Heart right ventricle (tissue), 16 donors: ENCODE measurements at regions of chr6 and their contacts with region 1.

Region 1: DNA sequence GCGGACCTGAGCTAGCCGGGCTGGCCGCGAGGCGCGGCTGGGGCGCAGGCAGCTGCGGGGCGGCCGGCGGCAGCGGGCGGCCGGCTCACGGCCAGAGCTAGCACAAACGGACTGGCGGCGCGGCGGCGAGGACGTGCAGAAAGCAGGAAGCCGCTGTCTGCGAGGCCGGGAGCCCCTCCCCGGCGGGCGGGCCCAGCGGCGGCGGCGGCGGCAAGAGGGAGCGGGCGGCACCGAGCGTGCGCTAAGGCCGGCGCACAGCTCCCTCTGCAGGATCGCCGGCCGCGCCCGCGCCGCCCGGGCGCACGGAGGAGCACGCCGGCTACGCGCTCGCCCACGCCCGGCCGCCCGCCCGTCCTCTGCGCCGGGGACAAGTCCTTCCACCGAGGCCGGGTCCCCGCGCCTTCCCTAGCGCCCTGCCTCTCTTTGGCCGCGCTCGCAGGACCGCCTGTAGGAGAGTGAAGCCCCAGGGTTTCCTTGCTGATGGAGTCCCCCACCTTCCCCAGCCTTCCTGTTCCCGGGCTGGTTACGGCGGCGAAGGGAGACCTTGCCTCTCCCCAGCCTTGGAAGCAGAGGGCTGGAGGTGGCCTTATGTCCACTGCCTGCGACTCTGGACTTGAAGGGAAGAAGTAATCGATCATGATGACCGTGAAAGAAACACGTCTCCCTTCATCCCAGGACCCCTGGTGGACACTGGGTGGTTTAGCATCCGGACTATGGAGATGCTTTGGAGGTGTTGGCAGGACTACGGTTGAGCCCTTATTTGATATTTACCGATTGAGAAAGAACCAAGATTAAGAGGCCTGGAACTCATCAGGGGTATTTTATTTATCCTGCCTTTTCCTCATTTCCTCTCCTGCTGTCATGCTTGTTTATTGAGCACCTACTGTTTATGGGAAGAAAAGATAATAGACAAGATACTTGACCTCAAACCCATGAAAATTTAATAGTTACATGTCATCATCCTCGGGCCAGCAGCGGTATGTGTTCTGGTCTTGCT is at the start of gene PREP:
- DNase-seq: peak; percentile 81 to 89
- ATAC-seq: peak; percentile 93 to 98 (median 96)
- H3K4me3 ChIP-seq: peak within 1 kb of the TSS; percentile 68 to 99 (median 94)
- H3K27ac ChIP-seq: peak within 1 kb of the TSS; percentile 60 to 92 (median 88)
- H3K4me1 ChIP-seq: peaks cover 7 to 42% (median 27%) of the 10 kb centered on the region in 9 donors
- H3K27me3 ChIP-seq: no peaks in the 10 kb centered on the region
- CTCF ChIP-seq: peak; percentile 36 to 79 (median 71)
- total RNA-seq, gene PREP: 23.7 to 37.4 (median 28.9) TPM

Region 2: DNA sequence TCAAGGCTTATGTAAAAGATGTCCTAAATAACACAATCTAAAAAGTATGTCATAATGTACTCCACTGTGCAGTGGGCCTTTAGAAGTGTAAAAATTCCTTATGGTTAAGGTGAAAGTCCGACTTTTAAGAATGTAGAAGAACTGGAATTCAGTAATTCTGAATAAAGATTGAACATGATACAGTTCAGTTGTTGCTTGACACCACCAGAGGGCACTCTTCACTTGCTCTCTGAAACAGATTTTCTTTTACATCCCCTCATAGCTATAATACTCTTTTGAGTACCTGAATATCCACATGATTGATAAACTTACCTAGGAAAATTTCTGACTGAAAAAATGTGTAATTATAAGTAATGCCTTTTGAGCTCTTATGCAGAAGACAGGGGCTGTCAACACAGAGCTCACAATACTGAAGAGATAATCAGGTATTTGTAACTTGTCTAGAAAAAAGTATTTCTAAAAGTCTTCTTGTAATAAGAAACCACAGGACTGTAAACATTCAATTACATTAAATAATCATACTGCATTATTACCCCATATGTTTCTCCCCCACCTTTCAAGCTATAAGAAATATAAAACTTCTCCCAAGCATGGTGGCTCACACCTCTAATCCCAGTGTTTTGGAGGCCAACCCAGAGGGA is 315.5 kb before region 1 on chr6:
- intact Hi-C with region 1: loop called in 9 of 10 experiments (anchors 1 to 10 kb)
- DNase-seq: peak in 1 of 2 donors; percentile 28
- ATAC-seq: peak in 4 of 8 donors; percentile 43 to 62 (median 58)
- H3K4me3 ChIP-seq: no peak overlapping the region
- H3K27ac ChIP-seq: no peak overlapping the region
- H3K4me1 ChIP-seq: peaks cover 0 to 8% (median 0%) of the 10 kb centered on the region in 9 donors
- H3K27me3 ChIP-seq: no peaks in the 10 kb centered on the region
- CTCF ChIP-seq: peak; percentile 65 to 92 (median 84)

Region 3: DNA sequence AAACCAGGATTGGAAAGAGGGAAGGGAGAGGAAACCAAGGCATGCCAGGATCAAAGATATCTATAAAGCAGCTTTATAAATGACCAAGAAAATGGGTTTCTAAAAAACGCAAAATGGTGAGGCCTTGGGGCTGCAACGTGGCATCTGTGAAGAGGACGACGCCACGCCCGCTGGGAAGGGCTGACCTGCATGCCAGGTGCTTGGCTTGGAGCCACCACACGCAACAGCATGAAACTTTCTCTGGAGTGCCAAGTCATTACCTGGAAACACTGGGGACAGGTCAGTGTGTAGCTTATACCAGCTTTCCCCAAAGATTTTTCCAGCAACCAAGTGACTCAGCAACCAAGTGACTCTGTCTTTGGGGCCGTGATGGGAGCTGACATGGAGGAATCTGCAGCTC is 305.9 kb before region 1 on chr6:
- intact Hi-C with region 1: loop called in 2 of 10 experiments (anchors 10 kb)
- DNase-seq: no peak
- ATAC-seq: no peak
- H3K4me3 ChIP-seq: no peak overlapping the region
- H3K27ac ChIP-seq: no peak overlapping the region
- H3K4me1 ChIP-seq: no peaks in the 10 kb centered on the region
- H3K27me3 ChIP-seq: no peaks in the 10 kb centered on the region
- CTCF ChIP-seq: no peak

Region 4: GRCh38 chr6:105136431-105137350 is 266.5 kb before region 1 on chr6:
- intact Hi-C with region 1: loop called in 1 of 10 experiments (anchors 1 kb)
- DNase-seq: peak; percentile 75 to 77
- ATAC-seq: peak; percentile 78 to 90 (median 85)
- H3K4me3 ChIP-seq: peak overlapping the region; percentile 69 to 95 (median 86)
- H3K27ac ChIP-seq: peak overlapping the region; percentile 81 to 93 (median 91)
- H3K4me1 ChIP-seq: peaks cover 0 to 15% (median 7%) of the 10 kb centered on the region in 9 donors
- H3K27me3 ChIP-seq: peaks cover 0 to 63% (median 0%) of the 10 kb centered on the region in 7 donors
- CTCF ChIP-seq: peak in 6 of 9 donors; percentile 9 to 46 (median 40)

Region 5: DNA sequence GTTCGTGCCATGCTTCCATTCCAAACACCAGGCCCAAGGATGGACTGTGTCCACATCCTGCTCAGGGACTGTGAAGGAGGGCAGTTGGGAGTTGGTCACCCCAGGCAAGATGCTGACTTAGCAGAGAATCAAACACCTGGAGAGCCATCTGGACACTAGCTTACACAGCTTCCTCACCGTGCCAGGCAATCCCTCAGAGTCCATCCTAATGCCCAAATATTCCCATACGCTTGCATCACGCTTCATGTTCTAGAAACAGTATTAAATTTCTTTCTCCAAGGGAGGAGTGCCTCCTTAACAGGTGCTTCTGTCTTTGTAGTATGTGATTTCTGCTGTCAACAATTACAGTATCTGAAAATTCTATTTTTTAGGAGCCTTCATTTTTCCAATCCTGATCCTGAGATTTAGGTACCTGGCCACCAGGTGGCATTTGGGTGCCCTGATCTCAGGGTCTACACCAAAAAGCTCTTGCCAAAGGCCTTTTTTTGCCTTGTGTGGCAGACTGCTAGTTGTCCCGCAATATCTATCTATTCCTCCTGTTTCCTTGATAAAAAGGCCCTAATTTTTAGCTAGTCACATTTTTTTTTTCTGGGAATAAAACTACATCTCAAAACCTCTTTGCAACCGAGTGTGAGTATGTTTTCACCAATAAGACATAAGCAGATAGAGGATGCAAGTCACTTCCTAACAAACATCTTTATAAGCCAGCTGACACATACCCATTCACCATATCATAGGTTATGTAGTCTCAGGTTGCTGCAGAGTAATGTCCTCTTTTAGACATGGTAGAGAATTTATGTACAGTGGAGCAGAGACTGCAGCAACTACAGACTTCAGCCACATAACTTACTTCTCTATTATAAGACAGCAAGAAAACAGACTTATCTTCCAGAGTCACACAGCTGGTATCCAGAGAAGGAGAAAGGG is 85.4 kb before region 1 on chr6:
- intact Hi-C with region 1: loop called in 2 of 10 experiments (anchors 5 kb)
- DNase-seq: no peak
- ATAC-seq: no peak
- H3K4me3 ChIP-seq: no peak overlapping the region
- H3K27ac ChIP-seq: no peak overlapping the region
- H3K4me1 ChIP-seq: peaks cover 0 to 10% (median 0%) of the 10 kb centered on the region in 9 donors
- H3K27me3 ChIP-seq: no peaks in the 10 kb centered on the region
- CTCF ChIP-seq: peak in 7 of 9 donors; percentile 6 to 41 (median 32)